ENCODE measurements at regions of chr19 and their contacts with region 1.

Region 1: DNA sequence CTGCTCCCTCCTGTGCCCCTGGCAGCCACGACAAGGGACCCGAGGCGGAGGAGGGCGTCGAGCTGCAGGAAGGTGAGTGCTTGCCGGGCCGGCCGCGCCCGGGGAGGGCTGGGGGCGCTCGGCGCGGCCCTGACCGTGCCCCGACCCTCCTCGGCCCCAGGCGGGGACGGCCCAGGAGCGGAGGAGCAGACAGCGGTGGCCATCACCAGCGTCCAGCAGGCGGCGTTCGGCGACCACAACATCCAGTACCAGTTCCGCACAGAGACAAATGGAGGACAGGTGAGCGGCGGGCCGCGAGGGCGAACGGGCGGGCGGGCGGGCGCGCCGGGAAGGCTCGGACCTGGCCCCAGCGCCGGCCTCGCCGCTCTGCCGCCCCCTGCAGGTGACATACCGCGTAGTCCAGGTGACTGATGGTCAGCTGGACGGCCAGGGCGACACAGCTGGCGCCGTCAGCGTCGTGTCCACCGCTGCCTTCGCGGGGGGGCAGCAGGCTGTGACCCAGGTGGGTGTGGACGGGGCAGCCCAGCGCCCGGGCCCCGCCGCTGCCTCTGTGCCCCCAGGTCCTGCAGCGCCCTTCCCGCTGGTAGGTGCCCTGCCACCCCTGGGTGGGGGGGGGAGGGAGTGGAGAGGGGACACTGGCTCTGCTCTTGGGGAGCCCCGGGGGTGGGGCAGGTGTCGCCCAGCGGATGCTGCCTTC is 807 bp downstream of the USF2 start:
- DNase-seq: peak in 1 of 2 experiments; percentile 97
- H3K4me3 ChIP-seq: peak overlapping the region; percentile 32 to 68 (median 59)
- H3K27ac ChIP-seq: peak overlapping the region; percentile 93
- H3K4me1 ChIP-seq: peaks cover 0 to 14% (median 8%) of the 10 kb centered on the region in 4 experiments; a peak in 5 of 7 replicates
- H3K27me3 ChIP-seq: no peaks in the 10 kb centered on the region
- CTCF ChIP-seq: peak; percentile 46 to 72 (median 66)
- EP300 ChIP-seq: no peak
- POLR2A ChIP-seq: peak in 1 of 2 experiments; percentile 50; a peak in 2 of 3 replicates
- RAD21 ChIP-seq: peak; percentile 62 to 63

Region 2: DNA sequence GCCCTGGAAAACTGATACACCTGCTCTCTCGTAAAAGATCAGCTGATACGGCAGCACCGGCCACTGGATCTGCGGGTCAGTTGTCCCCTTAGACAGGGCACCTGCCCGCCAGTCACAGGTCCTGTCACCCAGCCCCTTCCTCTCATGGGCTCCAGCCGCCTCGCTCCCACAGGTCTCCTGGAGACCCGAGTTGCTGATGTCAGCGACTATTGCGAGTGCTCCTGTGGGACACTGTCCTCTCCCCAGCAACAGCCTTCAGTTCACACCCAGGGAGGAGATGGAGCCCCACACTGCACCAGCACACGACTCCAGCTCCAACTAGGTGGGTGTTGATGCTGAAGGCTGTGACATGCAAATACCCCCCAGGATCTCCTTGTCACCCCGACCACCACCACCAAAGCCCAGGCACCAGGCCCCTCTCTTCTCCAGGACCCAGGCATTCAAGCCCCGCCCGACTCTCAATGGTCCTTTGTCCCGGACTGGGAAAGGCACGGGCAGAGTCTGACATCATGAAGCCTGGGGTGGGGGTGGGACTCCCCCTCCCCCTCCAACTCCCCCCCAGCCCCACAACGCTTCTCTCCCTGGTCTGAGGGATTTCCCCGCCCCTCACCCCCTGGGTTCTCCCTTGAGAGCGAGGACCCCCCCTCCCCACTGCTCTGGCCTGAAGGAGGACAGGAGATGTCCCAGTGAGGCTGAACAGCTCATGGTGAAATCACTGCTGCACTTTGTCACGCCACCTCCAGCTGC is 21.0 kb after region 1 on chr19:
- CTCF ChIA-PET with region 1: interaction called, 14 read pairs
- POLR2A ChIA-PET with region 1: interaction called, 9 read pairs
- DNase-seq: no peak
- H3K4me3 ChIP-seq: no peak overlapping the region
- H3K27ac ChIP-seq: no peak overlapping the region
- H3K4me1 ChIP-seq: peaks cover 0 to 20% (median 9%) of the 10 kb centered on the region in 4 experiments; a peak in 6 of 7 replicates
- H3K27me3 ChIP-seq: no peaks in the 10 kb centered on the region; a peak in 1 of 7 replicates
- CTCF ChIP-seq: no peak
- EP300 ChIP-seq: no peak
- POLR2A ChIP-seq: no peak
- RAD21 ChIP-seq: no peak

Region 3: GRCh38 chr19:35330475-35330874 is 60.9 kb after region 1 on chr19:
- CTCF ChIA-PET with region 1: no interaction called
- POLR2A ChIA-PET with region 1: no interaction called
- DNase-seq: no peak
- H3K4me3 ChIP-seq: no peak overlapping the region
- H3K27ac ChIP-seq: no peak overlapping the region
- H3K4me1 ChIP-seq: no peaks in the 10 kb centered on the region; a peak in 1 of 7 replicates
- H3K27me3 ChIP-seq: no peaks in the 10 kb centered on the region
- CTCF ChIP-seq: no peak
- EP300 ChIP-seq: no peak
- POLR2A ChIP-seq: no peak
- RAD21 ChIP-seq: no peak

Measured in H1 (cell line).